ENCODE measurements at regions of chr16 and their contacts with region 1.

Region 1: GRCh38 chr16:66660422-66661209 is 35.9 kb downstream of the CMTM4 start:
- DNase-seq: peak; percentile 81 to 83
- ATAC-seq: peak; percentile 89
- H3K4me3 ChIP-seq: no peak overlapping the region
- H3K27ac ChIP-seq: peak overlapping the region in 1 of 2 donors; percentile 45
- H3K4me1 ChIP-seq: no peaks in the 10 kb centered on the region
- H3K27me3 ChIP-seq: no peaks in the 10 kb centered on the region

Region 2: DNA sequence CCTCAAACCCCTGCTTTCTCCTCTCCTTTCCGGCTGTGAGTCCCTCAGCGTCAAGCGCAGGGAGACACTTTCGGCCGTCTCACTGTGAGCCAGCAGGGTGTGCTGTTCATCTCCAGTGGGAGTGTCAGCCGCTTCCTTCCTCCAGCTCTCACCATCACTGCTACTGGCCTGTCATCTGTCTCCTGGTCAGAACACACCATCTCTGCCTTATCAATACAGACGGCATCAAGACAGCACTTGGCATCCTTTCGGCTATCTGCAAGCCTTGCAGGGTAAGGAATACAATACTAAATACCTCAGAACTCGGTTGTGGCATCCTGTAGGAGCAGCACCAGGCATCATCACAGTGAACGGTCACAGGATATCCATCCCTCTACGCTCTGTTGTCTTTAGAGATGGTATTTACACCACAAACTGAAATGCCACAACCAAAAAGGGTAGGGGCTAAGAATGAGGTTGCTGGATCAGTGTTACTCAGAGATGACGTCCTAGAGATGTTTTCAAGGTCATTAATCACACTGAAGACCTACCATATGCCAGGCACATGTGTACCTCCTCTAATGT is 56.6 kb after region 1 on chr16:
- intact Hi-C with region 1: loop called in 1 of 2 experiments (anchors 5 kb)
- DNase-seq: no peak
- ATAC-seq: no peak
- H3K4me3 ChIP-seq: no peak overlapping the region
- H3K27ac ChIP-seq: no peak overlapping the region
- H3K4me1 ChIP-seq: no peaks in the 10 kb centered on the region
- H3K27me3 ChIP-seq: no peaks in the 10 kb centered on the region

Region 3: GRCh38 chr16:66751303-66751991 is 90.8 kb after region 1 on chr16 and contains the start of gene DYNC1LI2:
- intact Hi-C with region 1: loop called in 1 of 2 experiments (anchors 5 kb)
- DNase-seq: peak; percentile 89 to 94
- ATAC-seq: peak; percentile 95
- H3K4me3 ChIP-seq: peak within 1 kb of the TSS; percentile 77 to 92
- H3K27ac ChIP-seq: peak within 1 kb of the TSS in 1 of 2 donors; percentile 90
- H3K4me1 ChIP-seq: peaks cover 0 to 4% of the 10 kb centered on the region in 2 donors
- H3K27me3 ChIP-seq: no peaks in the 10 kb centered on the region
- total RNA-seq, gene DYNC1LI2: 166 to 169 TPM

Region 4: GRCh38 chr16:66905633-66906539 is 245.3 kb after region 1 on chr16:
- intact Hi-C with region 1: no loop called
- DNase-seq: peak in 1 of 2 donors; percentile 69
- ATAC-seq: no peak
- H3K4me3 ChIP-seq: no peak overlapping the region
- H3K27ac ChIP-seq: no peak overlapping the region
- H3K4me1 ChIP-seq: peaks cover 0 to 4% of the 10 kb centered on the region in 2 donors
- H3K27me3 ChIP-seq: no peaks in the 10 kb centered on the region

Measured in aorta (tissue), 5 donors.